ENCODE measurements at regions of chr14 and their contacts with region 1.

Region 1: DNA sequence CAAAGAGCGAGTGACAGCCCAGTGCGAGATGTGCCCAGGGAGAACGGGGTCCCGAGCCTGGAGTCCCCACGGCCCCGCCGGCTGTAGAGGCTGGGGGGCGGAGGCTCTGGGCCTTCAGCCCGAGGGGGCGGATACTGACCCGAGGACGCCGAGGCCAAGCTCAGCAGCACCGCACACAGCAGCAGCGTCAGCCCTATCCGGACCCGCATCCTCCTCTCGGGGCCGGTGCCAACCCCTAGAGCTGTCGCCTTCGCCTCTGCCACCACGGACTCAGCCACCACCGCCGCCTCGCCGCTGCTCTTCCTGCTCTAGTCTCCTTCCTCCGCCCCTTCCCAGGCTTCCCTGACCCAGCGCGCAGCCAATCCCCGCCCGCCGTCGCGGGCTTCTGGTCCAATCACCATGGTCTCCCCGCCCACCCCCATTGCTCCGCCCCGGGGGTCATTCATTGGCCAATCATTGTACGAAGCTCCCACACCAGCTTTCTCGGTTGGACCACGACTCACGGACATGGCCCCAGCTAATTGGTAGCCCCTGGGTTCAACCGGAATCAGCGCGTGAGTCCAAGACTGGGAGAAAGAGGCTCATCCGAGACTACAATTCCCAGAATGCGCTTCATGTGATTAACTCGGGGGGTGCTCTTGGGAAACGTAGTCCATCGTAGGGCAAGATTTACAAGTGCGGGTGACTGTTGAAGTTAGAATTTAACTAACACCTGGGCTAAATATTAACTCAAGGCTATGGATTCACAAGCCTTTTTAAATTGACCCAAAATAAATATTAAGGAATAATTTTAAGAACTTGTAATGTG is at the start of gene SEL1L:
- DNase-seq: peak; percentile 100
- H3K4me3 Mint-ChIP-seq: peak within 1 kb of the TSS; percentile 91
- H3K27ac Mint-ChIP-seq: peak within 1 kb of the TSS; percentile 96
- H3K4me1 Mint-ChIP-seq: peaks cover 30% of the 10 kb centered on the region
- H3K27me3 Mint-ChIP-seq: no peaks in the 10 kb centered on the region
- CTCF ChIP-seq: no peak
- total RNA-seq, gene SEL1L: 152 and 190 TPM in 2 replicates

Region 2: DNA sequence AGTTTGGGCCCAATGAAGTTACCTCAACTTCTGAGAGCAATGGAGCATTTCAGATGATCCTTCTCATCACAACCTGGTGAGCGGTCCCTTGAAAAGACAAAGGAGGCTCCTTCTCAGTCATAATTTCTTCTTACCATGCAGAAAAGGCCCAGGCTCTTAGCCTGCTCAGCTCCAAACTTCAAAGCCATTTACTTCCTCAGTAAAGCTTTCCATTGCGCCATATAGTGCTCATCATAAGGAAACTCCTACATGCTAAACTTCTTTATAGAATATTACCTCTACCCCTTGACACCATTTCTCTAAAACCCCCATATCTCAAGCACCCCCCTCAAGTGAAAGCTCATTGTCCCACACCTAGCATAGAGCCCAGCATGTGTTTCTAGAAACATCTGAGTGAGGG is 440.1 kb before region 1 on chr14:
- CTCF ChIA-PET with region 1: no interaction called
- POLR2A ChIA-PET with region 1: no interaction called
- intact Hi-C with region 1: no loop called
- DNase-seq: no peak
- H3K4me3 Mint-ChIP-seq: no peak overlapping the region
- H3K27ac Mint-ChIP-seq: no peak overlapping the region
- H3K4me1 Mint-ChIP-seq: no peaks in the 10 kb centered on the region
- H3K27me3 Mint-ChIP-seq: peaks cover 22% of the 10 kb centered on the region
- CTCF ChIP-seq: no peak

Region 3: GRCh38 chr14:81423504-81423903 is 110.2 kb before region 1 on chr14:
- CTCF ChIA-PET with region 1: no interaction called
- POLR2A ChIA-PET with region 1: no interaction called
- intact Hi-C with region 1: no loop called
- DNase-seq: no peak
- H3K4me3 Mint-ChIP-seq: no peak overlapping the region
- H3K27ac Mint-ChIP-seq: no peak overlapping the region
- H3K4me1 Mint-ChIP-seq: peaks cover 8% of the 10 kb centered on the region
- H3K27me3 Mint-ChIP-seq: no peaks in the 10 kb centered on the region
- CTCF ChIP-seq: no peak

Region 4: GRCh38 chr14:81523616-81524015 is 10.1 kb before region 1 on chr14:
- CTCF ChIA-PET with region 1: interaction called, 6 read pairs
- POLR2A ChIA-PET with region 1: interaction called, 15 read pairs
- intact Hi-C with region 1: no loop called
- DNase-seq: no peak
- H3K4me3 Mint-ChIP-seq: no peak overlapping the region
- H3K27ac Mint-ChIP-seq: no peak overlapping the region
- H3K4me1 Mint-ChIP-seq: peaks cover 24% of the 10 kb centered on the region
- H3K27me3 Mint-ChIP-seq: no peaks in the 10 kb centered on the region
- CTCF ChIP-seq: no peak

Measured in MCF 10A (cell line).